ENCODE measurements at regions of chr3 and their contacts with region 1.

Region 1: DNA sequence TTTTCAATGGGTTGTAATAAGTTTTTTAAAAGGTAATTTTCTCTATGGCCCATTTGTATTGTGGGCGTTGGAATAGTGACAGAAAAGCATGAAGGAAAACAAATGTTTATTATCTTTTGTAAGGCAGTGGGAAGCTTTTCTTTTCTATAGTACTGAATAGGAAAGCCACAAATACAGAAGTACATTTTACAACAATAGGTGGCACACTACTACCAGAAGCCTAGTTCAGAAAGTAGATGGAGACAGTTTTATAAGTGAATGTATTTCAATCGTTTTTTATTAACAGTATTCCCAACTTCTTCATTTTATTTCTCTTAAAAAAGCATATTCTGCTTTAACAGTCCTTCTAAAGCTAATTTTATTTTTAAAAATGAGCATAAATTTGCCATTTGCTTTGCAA is 296.7 kb downstream of the PTPRG start:
- DNase-seq: no peak
- ATAC-seq: peak; percentile 56

Region 2: DNA sequence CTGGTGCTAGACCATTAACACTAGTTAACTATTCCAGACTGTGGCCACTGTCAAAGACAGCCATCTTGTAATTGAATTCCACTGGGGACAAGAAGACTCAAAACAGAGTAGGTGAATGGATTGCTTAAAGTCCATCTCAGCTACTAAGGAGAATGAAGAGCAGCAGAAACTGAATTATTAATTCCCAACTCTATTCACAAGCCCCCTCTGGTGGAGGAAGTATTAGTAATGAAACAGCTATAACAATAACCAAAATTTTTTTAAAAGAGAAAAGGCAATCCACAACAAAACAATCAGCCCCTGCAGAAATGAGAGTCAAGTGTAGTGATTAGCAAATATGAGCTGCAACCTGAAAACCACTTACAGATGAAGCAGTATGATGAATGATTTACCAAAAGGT is 909.6 kb before region 1 on chr3:
- intact Hi-C with region 1: no loop called
- DNase-seq: no peak
- ATAC-seq: no peak

Region 3: DNA sequence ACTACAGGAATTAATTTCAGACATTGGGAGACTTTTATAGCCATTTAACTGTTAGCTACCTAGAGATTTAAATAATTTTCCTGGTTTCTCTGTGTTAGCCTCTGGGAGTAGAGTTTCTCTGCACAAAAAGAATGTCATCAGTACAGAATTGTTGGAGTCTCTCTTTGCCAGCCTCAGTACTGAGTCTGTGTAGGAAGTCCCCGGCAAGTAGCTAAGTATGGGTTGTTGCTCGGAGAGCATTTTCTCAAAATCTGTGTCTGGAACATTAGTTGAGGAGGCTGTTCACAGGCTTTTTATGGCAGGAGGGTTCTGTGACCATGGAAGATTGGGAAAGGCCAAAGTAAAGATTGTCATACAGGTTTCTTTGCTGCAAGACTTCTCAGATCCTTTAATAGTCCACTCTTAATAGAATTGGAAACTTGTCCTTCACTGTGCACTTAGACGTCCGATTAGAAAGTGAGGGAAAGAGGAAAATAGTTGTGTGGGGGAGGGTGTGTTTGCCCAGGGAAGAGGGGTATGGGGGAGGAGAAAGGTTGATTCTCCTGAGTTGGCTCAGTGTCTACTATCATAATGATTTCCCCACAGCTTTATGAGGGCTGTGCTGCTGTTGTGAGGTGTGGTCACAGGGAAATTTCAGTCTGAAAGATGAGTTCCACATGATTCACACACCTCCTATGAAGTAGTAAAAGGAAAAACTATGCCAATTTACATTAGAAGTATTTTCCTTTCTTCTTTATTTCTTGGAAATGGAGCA is 89.6 kb before region 1 on chr3:
- intact Hi-C with region 1: no loop called
- DNase-seq: no peak
- ATAC-seq: no peak

Region 4: DNA sequence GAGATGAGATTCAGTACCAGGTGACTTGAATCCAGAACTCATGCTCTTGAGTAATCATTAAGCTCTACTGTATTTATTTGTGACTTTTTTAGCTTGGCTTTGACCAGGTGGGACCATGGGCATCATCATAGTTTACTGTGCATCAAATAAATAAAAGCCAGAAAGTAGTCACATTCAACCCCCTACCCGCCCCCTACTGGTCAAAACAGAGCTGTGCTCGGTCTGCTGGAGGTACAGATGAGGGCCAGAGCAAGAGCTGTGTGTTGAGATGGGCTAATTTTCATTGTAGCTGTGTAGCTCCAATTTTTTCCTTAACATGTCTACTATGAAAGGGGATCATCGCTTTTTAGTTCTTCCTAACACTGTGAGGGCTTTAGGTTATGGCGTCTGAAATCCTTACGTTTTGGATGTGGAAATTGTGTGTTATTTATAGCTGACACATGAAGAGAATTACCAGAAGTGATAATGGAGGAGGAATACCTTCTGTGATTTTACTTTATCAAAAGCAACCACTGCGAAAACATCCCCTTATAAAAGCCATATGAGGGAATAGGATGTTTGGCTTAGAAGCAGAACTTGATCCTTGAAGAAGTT is 78.4 kb after region 1 on chr3:
- intact Hi-C with region 1: no loop called
- DNase-seq: no peak
- ATAC-seq: no peak

Region 5: GRCh38 chr3:62188681-62189383 is 330.8 kb after region 1 on chr3:
- intact Hi-C with region 1: loop called (anchors 5 kb)
- DNase-seq: peak; percentile 84
- ATAC-seq: peak; percentile 73